Gastrocnemius medialis (tissue), 4 donors: ENCODE measurements at regions of chr19 and their contacts with region 1.

Region 1: DNA sequence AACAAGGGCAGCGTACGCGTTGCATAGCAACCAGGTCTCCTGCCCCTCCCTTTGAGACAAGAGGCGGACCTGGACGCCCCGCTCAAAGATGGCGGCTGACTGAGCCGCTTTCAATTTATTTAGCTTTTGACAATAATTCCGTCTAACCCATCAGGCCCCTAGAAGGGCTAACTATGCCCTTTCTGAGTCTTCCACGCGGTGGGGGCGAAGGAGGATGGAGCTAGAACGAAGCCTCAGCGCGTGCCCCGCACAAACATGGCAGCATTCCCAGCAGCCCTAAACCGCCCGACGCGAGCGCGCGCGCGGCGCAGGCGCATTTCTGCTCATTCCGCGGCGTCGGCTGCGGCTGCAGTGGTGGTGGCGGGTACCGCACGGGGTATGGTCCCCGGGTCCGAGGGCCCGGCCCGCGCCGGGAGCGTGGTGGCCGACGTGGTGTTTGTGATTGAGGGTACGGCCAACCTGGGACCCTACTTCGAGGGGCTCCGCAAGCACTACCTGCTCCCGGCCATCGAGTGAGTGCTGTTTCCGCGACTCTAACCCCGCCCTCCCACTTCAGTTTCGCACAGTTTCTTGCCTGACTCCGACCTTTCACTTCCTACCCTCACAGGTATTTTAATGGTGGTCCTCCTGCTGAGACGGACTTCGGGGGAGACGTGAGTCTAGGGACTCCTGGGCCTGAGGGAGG is at the start of gene MED25:
- DNase-seq: peak; percentile 73 to 83
- ATAC-seq: peak; percentile 71 to 72
- H3K4me3 ChIP-seq: peak within 1 kb of the TSS; percentile 78 to 96 (median 86)
- H3K27ac ChIP-seq: peak within 1 kb of the TSS; percentile 94 to 99 (median 97)
- H3K4me1 ChIP-seq: peaks cover 17 to 23% of the 10 kb centered on the region in 2 donors
- H3K27me3 ChIP-seq: no peaks in the 10 kb centered on the region
- CTCF ChIP-seq: peak in 3 of 5 experiments; percentile 35 to 65 (median 54)
- POLR2A ChIP-seq: peak; percentile 90 to 97
- total RNA-seq, gene MED25: 46.6 to 105 (median 78.7) TPM

Region 2: GRCh38 chr19:49590071-49590970 is 227.8 kb before region 1 on chr19:
- in situ Hi-C with region 1: no loop called
- intact Hi-C with region 1: loop called (anchors 5 kb)
- DNase-seq: peak; percentile 84 to 95
- ATAC-seq: peak; percentile 68 to 74
- H3K4me3 ChIP-seq: peak overlapping the region; percentile 62 to 82 (median 70)
- H3K27ac ChIP-seq: peak overlapping the region; percentile 86 to 95 (median 94)
- H3K4me1 ChIP-seq: peaks cover 14 to 15% of the 10 kb centered on the region in 2 donors
- H3K27me3 ChIP-seq: no peaks in the 10 kb centered on the region
- CTCF ChIP-seq: no peak
- POLR2A ChIP-seq: peak; percentile 65 to 72

Region 3: DNA sequence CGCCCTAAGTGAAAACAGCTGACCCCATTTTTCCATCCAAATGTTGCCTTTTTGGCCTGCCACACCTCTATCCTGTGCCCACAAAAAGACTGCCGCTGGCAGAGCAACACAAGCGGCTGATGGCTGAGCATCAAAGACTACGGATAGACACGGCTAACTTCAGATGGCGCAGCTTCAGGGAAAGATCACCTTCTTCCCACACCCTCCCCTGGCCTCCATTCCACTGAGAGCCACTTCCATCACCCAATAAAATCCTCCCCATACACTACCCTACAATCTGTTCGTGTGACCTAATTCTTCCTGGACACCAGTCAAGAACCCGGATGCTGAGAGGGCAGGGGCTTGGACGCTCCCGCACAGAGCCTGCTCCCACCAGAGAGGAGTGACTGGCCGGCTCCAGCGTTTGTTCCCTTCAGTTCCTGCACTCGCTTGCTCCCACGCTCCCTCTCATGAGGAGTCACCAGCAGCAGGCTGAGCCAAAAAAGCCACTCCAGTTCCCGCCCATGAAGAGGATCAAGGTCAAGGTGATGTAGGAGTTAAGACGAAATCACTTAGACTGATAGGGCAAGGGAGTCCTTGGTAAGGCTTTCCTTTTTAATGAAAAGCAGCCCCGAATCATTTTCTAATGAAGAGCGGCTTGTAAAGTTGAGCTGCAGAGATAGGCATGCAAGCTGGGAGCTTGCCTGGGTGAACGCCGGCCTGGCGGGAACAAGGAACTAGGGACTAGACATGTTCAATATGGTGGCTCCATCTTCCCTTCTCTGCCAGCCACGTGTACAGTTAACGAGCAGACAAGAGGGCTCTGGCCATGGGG is 90.7 kb before region 1 on chr19:
- in situ Hi-C with region 1: no loop called
- intact Hi-C with region 1: no loop called
- DNase-seq: no peak
- ATAC-seq: no peak
- H3K4me3 ChIP-seq: no peak overlapping the region
- H3K27ac ChIP-seq: peak overlapping the region in 1 of 4 donors; percentile 6
- H3K4me1 ChIP-seq: no peaks in the 10 kb centered on the region
- H3K27me3 ChIP-seq: peaks cover 3 to 10% (median 5%) of the 10 kb centered on the region in 3 donors
- CTCF ChIP-seq: no peak
- POLR2A ChIP-seq: no peak

Region 4: DNA sequence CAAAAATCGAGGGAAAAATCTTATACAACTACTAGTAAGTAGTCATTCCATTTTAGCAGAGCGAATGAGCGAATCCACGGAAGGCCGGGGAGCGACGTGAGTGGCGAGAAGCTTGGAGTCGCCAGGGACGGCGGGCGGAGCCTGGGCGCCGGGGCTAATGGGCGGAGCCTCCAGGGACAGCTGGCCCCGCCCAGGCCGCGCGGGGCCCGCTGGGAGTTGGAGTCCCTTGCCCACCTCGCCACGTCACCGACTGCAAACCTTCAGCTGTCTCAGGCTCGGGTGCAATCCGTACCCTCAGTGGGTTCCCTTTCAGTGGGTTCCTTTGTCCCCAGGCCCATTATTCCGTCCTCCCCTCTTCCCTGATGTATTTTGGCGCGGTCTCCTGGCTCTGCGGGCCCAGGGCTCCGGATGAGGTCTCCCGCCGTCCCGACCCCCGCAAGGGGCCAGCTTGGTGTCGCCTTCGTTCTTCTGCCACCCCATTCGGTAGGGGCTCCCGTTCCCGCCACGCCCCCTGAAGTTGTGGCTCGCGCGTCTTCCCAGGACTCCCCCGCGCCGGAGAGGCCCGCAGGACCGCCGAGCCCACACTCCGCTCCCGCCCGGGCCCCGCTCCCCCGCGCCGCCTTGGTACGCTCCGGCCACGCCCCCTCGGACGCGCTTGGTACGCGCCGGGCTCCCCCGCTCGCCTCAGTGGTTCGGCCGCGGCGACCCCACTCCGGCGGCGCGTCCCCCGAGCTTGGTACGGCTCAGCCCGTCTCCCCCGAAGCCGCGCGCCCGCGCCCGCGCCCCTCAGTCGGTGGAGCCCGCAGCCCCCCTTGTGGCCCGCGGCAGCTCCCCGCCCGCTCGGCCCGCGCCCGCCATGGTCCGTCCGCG is 32.6 kb after region 1 on chr19 and contains the start of gene PTOV1:
- in situ Hi-C with region 1: no loop called
- intact Hi-C with region 1: loop called (anchors 1 kb)
- DNase-seq: peak; percentile 88 to 92
- ATAC-seq: peak; percentile 89
- H3K4me3 ChIP-seq: peak within 1 kb of the TSS; percentile 73 to 79 (median 74)
- H3K27ac ChIP-seq: peak within 1 kb of the TSS; percentile 94 to 99 (median 97)
- H3K4me1 ChIP-seq: peaks cover 24 to 29% of the 10 kb centered on the region in 2 donors
- H3K27me3 ChIP-seq: no peaks in the 10 kb centered on the region
- CTCF ChIP-seq: peak in 1 of 5 experiments; percentile 11
- POLR2A ChIP-seq: peak; percentile 87 to 91
- total RNA-seq, gene PTOV1: 77.6 to 88.2 (median 87.0) TPM

Region 5: DNA sequence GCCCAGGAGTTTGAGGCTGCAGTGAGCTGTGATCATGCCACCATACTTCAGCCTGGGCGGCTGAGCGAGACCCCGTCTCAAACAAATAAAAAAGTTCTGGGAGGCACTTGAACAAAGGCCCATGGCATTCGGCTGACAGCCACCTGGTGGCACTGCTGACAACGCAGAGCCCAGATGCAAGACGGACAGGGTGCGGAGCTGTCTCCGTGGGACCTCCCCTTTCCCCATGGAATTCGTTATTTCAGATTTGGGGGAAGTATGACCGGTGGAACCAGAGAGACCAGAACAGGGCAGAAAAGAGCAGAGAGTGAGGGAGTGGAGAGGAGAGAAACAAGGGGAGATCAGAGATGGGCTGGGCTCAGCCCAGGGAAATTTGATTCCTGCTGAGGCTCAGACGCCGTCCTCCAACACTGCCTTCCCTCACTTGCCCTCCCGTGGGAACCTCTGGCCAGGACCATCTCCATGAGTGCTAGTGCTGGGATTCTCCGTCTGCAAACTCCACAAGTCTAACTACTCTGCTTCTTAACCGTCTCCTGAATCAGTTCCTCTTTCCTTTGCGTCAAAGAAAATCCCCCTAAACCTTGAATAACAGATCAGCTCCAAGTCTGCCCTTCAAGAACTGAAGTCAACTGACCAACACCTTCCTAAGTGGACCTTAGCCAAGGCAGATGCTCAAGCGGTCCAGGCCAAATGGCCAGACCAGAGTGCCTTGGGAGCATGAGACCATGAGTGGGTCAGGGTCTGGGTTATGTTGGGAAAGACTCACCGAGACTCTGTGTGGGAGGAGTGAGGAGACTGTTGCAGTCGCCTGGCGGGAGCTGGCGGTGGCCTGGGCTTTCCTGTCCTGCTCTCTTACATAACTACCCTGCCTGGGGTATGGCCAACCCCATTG is 99.0 kb after region 1 on chr19:
- in situ Hi-C with region 1: no loop called
- intact Hi-C with region 1: no loop called
- DNase-seq: peak in 1 of 2 donors; percentile 39
- ATAC-seq: peak in 1 of 2 donors; percentile 33
- H3K4me3 ChIP-seq: no peak overlapping the region
- H3K27ac ChIP-seq: peak overlapping the region in 1 of 4 donors; percentile 18
- H3K4me1 ChIP-seq: no peaks in the 10 kb centered on the region
- H3K27me3 ChIP-seq: no peaks in the 10 kb centered on the region
- CTCF ChIP-seq: no peak
- POLR2A ChIP-seq: no peak

Region 6: DNA sequence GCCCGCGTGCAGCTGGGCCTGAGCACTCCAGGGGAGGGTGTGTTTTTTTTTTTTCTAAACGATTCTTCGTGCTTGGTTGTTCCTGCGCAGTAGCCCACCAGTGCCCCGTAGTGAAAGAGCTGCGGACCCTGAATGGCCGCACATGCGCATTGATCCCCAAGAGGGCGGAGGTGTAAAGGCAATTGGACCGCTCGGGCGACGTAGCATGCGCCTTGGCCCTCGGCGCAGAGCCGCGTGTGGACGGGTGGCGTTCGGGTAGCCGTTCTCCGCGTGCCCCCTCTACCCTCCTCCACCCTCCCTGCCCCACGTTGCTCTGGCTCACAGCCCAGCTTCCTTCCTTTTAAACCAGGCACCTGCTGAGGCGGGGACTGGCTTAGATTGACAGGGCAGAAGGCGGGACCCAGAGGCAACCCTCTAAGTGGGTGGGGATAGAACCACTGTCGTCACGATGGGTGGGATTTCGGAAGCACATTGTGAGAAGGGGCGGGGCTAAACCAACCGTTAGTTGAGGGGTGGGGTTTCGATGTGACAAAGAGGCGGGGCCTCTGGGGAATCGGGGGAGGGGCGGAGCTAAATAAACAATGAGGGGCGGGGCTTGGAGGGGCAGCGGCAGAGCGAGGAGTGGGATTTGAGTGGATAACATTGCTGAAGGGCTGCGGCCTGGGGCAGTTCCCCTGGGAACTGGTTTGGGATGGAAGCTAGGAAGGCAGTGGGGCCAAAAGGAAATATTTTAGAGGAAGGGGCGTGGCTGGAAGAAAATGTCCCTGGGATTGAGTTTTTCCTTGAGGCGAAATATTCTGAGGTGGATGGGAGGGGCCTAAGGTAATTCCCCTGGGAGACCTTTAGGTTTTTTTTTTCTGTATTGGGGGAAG is 111.7 kb after region 1 on chr19:
- in situ Hi-C with region 1: no loop called
- intact Hi-C with region 1: no loop called
- DNase-seq: peak; percentile 91 to 95
- ATAC-seq: peak; percentile 91 to 95
- H3K4me3 ChIP-seq: peak overlapping the region; percentile 80 to 97 (median 92)
- H3K27ac ChIP-seq: peak overlapping the region; percentile 95 to 98 (median 96)
- H3K4me1 ChIP-seq: peaks cover 24 to 29% of the 10 kb centered on the region in 2 donors
- H3K27me3 ChIP-seq: no peaks in the 10 kb centered on the region
- CTCF ChIP-seq: peak in 1 of 5 experiments; percentile 29
- POLR2A ChIP-seq: peak; percentile 67 to 86